Activated CD4-positive, alpha-beta memory T cell treated with anti-CD3 and anti-CD28 coated beads for 36 hours (primary cell): ENCODE measurements at regions of chr18 and their contacts with region 1.

Region 1: GRCh38 chr18:79964330-79965118 is at the start of gene HSBP1L1:
- DNase-seq: peak; percentile 79
- H3K4me3 Mint-ChIP-seq: peak within 1 kb of the TSS; percentile 72
- H3K27ac Mint-ChIP-seq: peak within 1 kb of the TSS; percentile 77
- H3K4me1 Mint-ChIP-seq: peaks cover 35% of the 10 kb centered on the region
- H3K27me3 Mint-ChIP-seq: peaks cover 4% of the 10 kb centered on the region
- total RNA-seq, gene HSBP1L1: 8.5 to 8.8 TPM

Region 2: DNA sequence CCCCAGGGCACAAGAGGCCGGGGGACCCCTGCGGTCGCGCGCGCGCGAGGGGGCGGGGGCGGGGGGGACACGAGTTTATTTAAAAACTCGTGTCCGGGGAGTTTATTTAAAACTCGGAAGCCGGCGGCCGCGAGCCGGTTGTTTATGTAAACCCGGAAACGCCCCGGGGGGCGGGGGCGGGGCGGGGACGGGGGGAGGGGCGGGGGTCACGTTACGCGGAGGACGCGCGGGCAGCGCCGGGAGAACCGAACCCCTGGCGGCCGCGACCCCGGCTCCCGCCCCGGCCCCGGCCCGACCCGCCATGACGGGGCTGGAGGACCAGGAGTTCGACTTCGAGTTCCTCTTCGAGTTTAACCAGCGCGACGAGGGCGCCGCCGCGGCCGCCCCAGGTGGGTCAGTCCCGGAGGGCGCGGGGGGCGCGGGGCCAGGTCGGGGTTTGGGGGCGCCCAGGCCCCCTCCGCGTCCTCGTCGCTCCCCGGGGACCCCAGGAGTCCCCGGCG is 564.4 kb before region 1 on chr18:
- CTCF ChIA-PET with region 1: no interaction called
- POLR2A ChIA-PET with region 1: no interaction called
- intact Hi-C with region 1: loop called (anchors 10 kb)
- DNase-seq: peak; percentile 78
- H3K4me3 Mint-ChIP-seq: peak overlapping the region; percentile 41
- H3K27ac Mint-ChIP-seq: no peak overlapping the region
- H3K4me1 Mint-ChIP-seq: peaks cover 50% of the 10 kb centered on the region
- H3K27me3 Mint-ChIP-seq: no peaks in the 10 kb centered on the region

Region 3: DNA sequence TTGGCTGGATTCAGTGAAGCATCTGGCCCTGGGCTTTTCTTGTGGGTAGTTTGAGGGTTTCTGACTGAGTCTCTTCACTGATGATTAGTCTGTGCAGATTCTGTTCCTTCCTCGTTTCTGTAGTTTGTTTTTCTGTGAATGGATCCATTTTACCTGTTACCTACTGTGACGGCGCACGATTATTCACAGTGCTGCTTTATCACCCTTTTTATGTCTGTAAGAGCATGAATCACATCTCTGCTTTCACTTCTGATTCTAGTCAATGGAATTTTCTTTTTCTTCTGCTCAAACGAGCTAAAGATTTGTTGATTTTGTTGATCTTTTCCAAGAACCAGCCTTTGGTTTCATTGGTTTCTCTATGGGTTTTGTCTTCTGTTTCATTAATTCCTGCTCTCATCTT is 73.8 kb before region 1 on chr18:
- CTCF ChIA-PET with region 1: no interaction called
- POLR2A ChIA-PET with region 1: no interaction called
- intact Hi-C with region 1: loop called (anchors 2 kb)
- DNase-seq: peak; percentile 49
- H3K4me3 Mint-ChIP-seq: no peak overlapping the region
- H3K27ac Mint-ChIP-seq: peak overlapping the region; percentile 76
- H3K4me1 Mint-ChIP-seq: peaks cover 9% of the 10 kb centered on the region
- H3K27me3 Mint-ChIP-seq: no peaks in the 10 kb centered on the region

Region 4: DNA sequence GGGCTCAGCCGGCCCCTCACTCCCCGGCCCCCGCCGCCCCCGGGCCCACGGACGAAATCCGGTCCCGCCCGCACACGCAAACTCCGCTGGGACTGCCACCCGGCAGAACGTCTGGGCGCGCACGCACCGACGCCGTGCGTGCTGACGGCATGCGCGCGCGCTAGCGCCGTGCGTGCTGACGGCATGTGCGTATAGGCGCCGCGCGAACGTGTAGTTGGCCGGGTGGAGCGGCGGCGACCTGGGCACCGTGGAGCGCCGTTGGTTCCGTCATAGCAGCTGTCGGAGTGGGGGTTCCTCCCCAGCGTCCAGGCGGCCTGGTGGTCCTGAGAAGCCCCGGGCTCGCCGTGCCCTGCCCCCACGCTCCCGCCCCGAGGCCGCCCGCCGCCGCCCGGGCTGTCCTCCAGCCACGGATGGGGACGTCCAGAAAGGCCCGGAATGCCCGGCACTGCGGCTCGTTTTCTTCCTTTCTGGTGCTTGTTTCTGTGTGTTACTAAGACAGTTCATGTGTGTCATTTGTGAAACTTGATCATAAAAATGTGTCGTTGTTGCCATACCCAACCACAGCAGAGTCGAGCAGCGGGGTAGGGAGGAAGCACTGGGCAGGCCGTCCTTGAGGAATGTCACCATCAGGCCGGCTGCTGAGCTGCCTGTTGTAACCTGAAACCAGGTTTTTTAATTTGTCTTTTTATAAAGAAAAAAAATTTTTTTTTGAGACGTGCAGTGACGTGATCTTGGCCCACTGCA is 24.1 kb after region 1 on chr18 and contains the start of gene TXNL4A:
- CTCF ChIA-PET with region 1: interaction called, 7 read pairs
- POLR2A ChIA-PET with region 1: interaction called, 6 read pairs
- intact Hi-C with region 1: loop called (anchors 1 kb)
- DNase-seq: peak; percentile 90
- H3K4me3 Mint-ChIP-seq: peak within 1 kb of the TSS; percentile 94
- H3K27ac Mint-ChIP-seq: peak within 1 kb of the TSS; percentile 92
- H3K4me1 Mint-ChIP-seq: peaks cover 30% of the 10 kb centered on the region
- H3K27me3 Mint-ChIP-seq: no peaks in the 10 kb centered on the region
- total RNA-seq, gene TXNL4A: 169 to 175 TPM